Heart left ventricle (tissue), 16 donors: ENCODE measurements at regions of chr17 and their contacts with region 1.

Region 1: GRCh38 chr17:29252101-29252866 is 5.6 kb downstream of the CRYBA1 start:
- DNase-seq: no peak
- ATAC-seq: no peak
- H3K4me3 ChIP-seq: no peak overlapping the region
- H3K27ac ChIP-seq: no peak overlapping the region
- H3K4me1 ChIP-seq: peaks cover 0 to 36% (median 24%) of the 10 kb centered on the region in 12 donors
- H3K27me3 ChIP-seq: no peaks in the 10 kb centered on the region
- CTCF ChIP-seq: peak in 11 of 12 donors; percentile 1 to 46 (median 31)
- POLR2A ChIP-seq: no peak

Region 2: DNA sequence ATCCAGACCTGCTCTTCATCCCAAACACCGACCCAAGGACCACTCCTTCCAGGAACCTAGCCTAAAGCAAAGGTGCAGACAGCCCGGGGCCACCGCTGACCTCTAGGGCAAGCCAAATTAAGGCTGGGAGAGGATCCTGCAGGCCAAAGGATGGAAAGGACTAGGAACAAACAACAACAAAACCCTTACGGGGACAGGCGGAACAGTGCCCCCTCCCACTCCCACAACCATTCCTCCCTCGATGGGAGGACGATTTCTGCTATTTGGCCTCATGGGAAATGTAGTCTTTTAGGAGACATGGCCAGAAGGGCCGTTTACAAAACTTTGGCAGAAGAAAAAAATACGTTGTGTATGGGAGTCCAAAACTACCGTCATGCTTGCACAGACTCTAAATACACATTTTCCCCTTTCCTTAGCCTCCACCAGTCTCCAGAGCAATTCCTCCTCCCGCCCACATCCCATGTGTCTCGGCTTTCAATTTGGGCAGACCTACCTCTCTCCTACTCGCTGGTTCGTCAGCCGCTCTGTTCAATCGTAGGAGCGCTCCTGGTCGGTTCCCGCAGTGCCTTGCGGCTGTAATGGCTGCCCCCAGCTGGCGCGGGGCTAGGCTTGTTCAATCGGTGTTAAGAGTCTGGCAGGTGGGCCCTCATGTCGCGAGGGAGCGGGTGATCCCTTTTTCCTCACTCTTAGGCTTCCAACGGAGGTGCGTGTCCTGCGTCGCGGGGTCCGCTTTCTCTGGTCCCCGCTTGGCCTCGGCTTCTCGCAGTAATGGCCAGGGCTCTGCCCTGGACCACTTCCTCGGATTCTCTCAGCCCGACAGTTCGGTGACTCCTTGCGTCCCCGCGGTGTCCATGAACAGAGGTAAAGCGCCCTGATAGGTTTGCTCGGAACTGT is 397.6 kb before region 1 on chr17 and contains the start of gene ERAL1:
- intact Hi-C with region 1: no loop called
- DNase-seq: peak; percentile 85 to 89 (median 88)
- ATAC-seq: peak; percentile 98 to 100 (median 100)
- H3K4me3 ChIP-seq: peak within 1 kb of the TSS; percentile 69 to 93 (median 76)
- H3K27ac ChIP-seq: peak within 1 kb of the TSS; percentile 5 to 88 (median 75)
- H3K4me1 ChIP-seq: peaks cover 0 to 17% (median 9%) of the 10 kb centered on the region in 12 donors
- H3K27me3 ChIP-seq: no peaks in the 10 kb centered on the region
- CTCF ChIP-seq: peak in 4 of 12 donors; percentile 5 to 32 (median 14)
- POLR2A ChIP-seq: peak in 1 of 2 donors; percentile 55
- total RNA-seq, gene ERAL1: 28.0 to 78.2 (median 41.1) TPM

Region 3: DNA sequence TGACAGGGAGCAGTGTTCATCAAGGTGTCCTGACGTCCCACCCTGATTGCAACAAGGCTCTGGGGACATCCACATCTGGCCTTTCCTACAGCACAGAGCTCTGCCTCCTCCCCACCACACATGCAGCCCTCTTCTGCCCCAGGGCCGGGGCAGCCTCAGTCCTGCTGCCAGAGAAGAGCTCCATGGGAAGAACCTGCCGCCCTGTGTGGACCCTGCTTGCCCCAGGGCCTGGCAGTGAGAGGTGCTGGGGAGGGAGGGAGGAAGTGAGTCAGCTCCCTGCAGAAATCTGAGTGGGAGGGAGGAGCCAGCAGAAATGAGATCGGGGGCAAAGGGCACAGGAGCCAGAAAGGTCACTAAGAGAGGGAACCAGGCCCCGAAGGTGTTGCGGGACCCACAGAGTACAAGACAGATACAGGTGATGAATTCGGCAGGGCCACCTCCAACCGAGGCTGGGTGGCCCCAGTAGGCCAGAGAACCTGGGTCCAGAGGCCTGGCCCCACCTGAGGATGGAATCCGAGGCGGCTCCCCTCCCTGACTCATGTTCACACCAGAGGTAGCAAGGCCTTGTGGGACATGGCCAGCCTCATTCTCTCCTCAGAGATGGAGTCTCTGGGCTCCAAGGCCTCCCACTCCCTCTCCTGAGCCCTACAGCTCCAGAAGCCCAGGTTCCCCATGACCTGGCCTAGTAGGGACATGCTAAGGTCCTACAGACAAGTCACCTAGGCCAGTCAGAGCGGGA is 96.9 kb before region 1 on chr17:
- intact Hi-C with region 1: no loop called
- DNase-seq: peak in 3 of 5 donors; percentile 51 to 78 (median 60)
- ATAC-seq: peak; percentile 40 to 78 (median 70)
- H3K4me3 ChIP-seq: peak overlapping the region in 1 of 12 donors; percentile 24
- H3K27ac ChIP-seq: peak overlapping the region in 11 of 12 donors; percentile 51 to 83 (median 73)
- H3K4me1 ChIP-seq: peaks cover 16 to 87% (median 59%) of the 10 kb centered on the region in 12 donors
- H3K27me3 ChIP-seq: no peaks in the 10 kb centered on the region
- CTCF ChIP-seq: no peak
- POLR2A ChIP-seq: peak in 1 of 2 donors; percentile 34

Region 4: GRCh38 chr17:29273924-29274323 is 21.6 kb after region 1 on chr17:
- intact Hi-C with region 1: loop called in 1 of 10 experiments (anchors 2 kb)
- DNase-seq: no peak
- ATAC-seq: no peak
- H3K4me3 ChIP-seq: no peak overlapping the region
- H3K27ac ChIP-seq: no peak overlapping the region
- H3K4me1 ChIP-seq: peaks cover 0 to 51% (median 34%) of the 10 kb centered on the region in 12 donors
- H3K27me3 ChIP-seq: no peaks in the 10 kb centered on the region
- CTCF ChIP-seq: no peak
- POLR2A ChIP-seq: no peak

Region 5: DNA sequence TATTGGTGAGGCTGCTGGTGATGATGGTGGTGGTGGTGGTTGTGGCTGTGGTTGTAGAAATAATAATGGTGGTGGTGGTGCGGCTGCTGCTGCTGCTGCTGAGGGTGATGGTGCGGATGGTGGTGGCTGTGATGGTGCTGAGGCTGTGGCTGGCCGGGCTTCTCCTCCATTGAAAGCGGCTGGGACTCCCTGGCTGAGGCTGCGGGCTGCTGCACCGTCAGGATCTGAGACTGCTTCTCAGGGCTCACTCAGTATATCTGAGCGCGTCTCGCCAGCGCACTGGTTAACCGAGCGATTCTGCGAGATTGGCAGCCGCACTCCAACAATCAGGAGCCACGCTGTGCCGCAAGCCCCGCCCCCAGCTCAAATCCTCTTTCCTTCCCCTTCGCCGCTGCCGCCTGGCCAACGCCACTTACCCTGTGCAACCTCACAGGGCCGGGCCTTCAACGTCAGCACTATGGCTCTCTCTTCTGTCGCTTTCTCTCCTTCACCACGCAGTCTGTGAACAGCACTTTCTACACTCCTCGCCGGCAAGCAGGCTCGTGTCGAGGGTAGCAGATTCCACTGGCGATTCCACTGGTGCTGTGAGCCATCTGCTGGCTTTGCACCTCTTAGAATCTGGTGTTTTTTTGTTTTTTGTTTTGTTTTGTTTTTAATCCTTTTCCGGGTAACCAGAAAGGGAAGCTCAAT is 41.8 kb after region 1 on chr17 and contains the start of gene NUFIP2:
- intact Hi-C with region 1: loop called in 3 of 10 experiments (anchors 1 to 5 kb)
- DNase-seq: peak; percentile 99 to 100 (median 100)
- ATAC-seq: peak; percentile 94 to 98 (median 98)
- H3K4me3 ChIP-seq: peak within 1 kb of the TSS; percentile 61 to 99 (median 90)
- H3K27ac ChIP-seq: peak within 1 kb of the TSS; percentile 92 to 100 (median 96)
- H3K4me1 ChIP-seq: peaks cover 5 to 38% (median 29%) of the 10 kb centered on the region in 12 donors
- H3K27me3 ChIP-seq: no peaks in the 10 kb centered on the region
- CTCF ChIP-seq: peak in 2 of 12 donors; percentile 19 to 30
- POLR2A ChIP-seq: peak; percentile 100
- total RNA-seq, gene NUFIP2: 24.2 to 51.5 (median 35.7) TPM

Region 6: DNA sequence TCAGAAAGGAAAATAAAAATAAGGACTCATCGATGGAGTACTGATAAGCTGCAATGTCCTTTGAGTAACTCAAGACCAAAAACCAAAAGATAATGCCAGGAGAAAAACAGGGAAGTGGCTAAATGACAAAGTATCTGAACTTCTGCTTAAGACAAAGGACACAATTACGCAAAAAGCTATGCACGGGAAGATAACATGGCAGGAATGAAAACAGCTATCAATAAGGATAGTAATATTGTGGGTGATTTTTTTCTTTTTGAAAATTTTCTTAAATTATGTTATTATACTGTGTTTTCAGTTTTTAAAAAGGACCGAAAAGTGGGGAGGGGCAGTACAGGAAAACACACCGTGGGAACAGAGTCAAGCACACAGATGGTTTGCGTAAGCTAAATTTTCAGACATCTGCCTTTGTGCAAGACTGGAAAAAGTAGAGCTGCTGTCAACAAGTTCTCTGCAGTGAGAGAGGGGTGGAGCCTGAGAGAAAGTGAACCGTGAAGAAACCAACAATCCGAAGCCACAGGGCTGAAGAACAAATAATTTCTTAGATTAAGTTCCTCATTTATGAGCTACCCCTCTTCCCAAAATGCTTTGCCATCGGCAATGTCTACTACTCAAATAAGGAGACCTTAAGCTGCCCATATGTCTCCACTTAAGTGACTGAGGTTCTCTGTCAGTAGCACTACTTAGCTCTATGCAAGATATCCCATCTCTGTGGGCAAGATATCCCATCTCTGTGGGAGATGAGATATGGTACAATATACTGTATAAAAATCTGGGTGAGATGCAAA is 470.3 kb after region 1 on chr17:
- intact Hi-C with region 1: no loop called
- DNase-seq: peak in 4 of 5 donors; percentile 62 to 72 (median 67)
- ATAC-seq: peak; percentile 79 to 94 (median 90)
- H3K4me3 ChIP-seq: peak overlapping the region in 9 of 12 donors; percentile 7 to 51 (median 25)
- H3K27ac ChIP-seq: peak overlapping the region; percentile 75 to 89 (median 82)
- H3K4me1 ChIP-seq: peaks cover 2 to 94% (median 52%) of the 10 kb centered on the region in 12 donors
- H3K27me3 ChIP-seq: no peaks in the 10 kb centered on the region
- CTCF ChIP-seq: no peak
- POLR2A ChIP-seq: no peak